Naive thymus-derived CD4-positive, alpha-beta T cell (primary cell): ENCODE measurements at regions of chr1 and their contacts with region 1.

Region 1: DNA sequence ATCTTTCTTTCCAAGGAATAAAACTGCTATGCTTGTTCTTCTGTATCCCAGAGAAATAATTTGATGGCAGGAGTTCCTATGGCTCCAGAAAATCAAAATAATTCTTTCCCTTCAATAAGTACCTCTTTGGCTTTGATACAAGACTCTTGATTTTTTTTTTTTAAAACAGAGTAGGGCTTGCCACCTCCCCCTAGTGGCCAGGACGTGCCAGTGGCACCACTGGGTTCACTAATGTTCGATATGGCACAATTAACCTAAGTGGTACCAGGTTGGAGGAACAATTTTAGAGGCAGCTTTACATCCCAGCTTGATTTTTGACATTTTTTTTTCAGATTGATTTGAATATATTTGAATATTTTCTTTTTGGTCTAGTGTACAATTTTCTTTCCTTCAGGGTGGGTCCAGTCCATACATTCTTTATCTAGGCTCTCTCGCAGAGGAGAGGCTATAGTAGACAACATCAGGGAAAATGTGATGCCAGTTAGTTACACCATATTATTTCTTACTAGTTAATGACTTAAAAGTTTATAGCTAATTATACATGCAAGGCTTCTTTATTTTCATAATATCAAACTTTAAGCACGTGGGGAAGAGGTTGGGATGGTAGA is 330.9 kb downstream of the S1PR1 start:
- DNase-seq: peak in 7 of 9 donors; percentile 18 to 53 (median 42)
- ATAC-seq: peak; percentile 80
- H3K4me3 ChIP-seq: no peak overlapping the region
- H3K4me3 Mint-ChIP-seq: no peak overlapping the region
- H3K27ac ChIP-seq: no peak overlapping the region
- H3K27ac Mint-ChIP-seq: no peak overlapping the region
- H3K4me1 ChIP-seq: no peaks in the 10 kb centered on the region
- H3K4me1 Mint-ChIP-seq: peaks cover 0 to 1% (median 0%) of the 10 kb centered on the region in 7 donors
- H3K27me3 ChIP-seq: no peaks in the 10 kb centered on the region
- H3K27me3 Mint-ChIP-seq: peaks cover 0 to 31% (median 15%) of the 10 kb centered on the region in 5 donors

Region 2: DNA sequence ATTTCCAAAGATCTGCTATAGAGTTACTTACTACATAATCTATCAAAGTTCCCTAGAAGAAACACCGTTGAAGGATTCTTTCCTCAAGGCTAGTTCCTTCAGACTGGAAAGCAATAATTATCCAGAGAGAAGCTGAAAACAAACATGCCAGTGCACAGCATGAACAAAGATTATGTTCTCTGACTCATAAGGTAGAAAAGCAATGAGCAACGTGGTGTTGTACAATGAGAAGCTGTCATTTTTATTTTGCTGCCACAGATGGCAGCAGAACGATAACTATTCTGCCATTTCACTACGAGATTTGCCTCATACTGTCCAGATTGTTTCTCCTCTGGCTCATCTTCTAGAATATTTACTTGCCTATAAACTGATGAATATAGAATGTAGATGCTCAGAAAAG is 683.7 kb before region 1 on chr1:
- CTCF ChIA-PET with region 1: no interaction called
- POLR2A ChIA-PET with region 1: no interaction called
- intact Hi-C with region 1: loop called in 1 of 2 experiments (anchors 10 kb)
- DNase-seq: no peak
- ATAC-seq: no peak
- H3K4me3 ChIP-seq: no peak overlapping the region
- H3K4me3 Mint-ChIP-seq: no peak overlapping the region
- H3K27ac ChIP-seq: no peak overlapping the region
- H3K27ac Mint-ChIP-seq: no peak overlapping the region
- H3K4me1 ChIP-seq: no peaks in the 10 kb centered on the region
- H3K4me1 Mint-ChIP-seq: no peaks in the 10 kb centered on the region
- H3K27me3 ChIP-seq: no peaks in the 10 kb centered on the region
- H3K27me3 Mint-ChIP-seq: peaks cover 0 to 5% (median 0%) of the 10 kb centered on the region in 5 donors

Region 3: GRCh38 chr1:100921109-100921706 is 646.5 kb before region 1 on chr1:
- CTCF ChIA-PET with region 1: no interaction called
- POLR2A ChIA-PET with region 1: no interaction called
- intact Hi-C with region 1: loop called in 1 of 2 experiments (anchors 10 kb)
- DNase-seq: peak in 6 of 9 donors; percentile 35 to 62 (median 50)
- ATAC-seq: peak; percentile 77
- H3K4me3 ChIP-seq: no peak overlapping the region
- H3K4me3 Mint-ChIP-seq: peak overlapping the region in 1 of 10 donors; percentile 6
- H3K27ac ChIP-seq: peak overlapping the region; percentile 38
- H3K27ac Mint-ChIP-seq: peak overlapping the region in 8 of 9 donors; percentile 28 to 92 (median 88)
- H3K4me1 ChIP-seq: peaks cover 27 to 37% of the 10 kb centered on the region in 2 donors
- H3K4me1 Mint-ChIP-seq: peaks cover 13 to 62% (median 43%) of the 10 kb centered on the region in 7 donors
- H3K27me3 ChIP-seq: no peaks in the 10 kb centered on the region
- H3K27me3 Mint-ChIP-seq: no peaks in the 10 kb centered on the region

Region 4: DNA sequence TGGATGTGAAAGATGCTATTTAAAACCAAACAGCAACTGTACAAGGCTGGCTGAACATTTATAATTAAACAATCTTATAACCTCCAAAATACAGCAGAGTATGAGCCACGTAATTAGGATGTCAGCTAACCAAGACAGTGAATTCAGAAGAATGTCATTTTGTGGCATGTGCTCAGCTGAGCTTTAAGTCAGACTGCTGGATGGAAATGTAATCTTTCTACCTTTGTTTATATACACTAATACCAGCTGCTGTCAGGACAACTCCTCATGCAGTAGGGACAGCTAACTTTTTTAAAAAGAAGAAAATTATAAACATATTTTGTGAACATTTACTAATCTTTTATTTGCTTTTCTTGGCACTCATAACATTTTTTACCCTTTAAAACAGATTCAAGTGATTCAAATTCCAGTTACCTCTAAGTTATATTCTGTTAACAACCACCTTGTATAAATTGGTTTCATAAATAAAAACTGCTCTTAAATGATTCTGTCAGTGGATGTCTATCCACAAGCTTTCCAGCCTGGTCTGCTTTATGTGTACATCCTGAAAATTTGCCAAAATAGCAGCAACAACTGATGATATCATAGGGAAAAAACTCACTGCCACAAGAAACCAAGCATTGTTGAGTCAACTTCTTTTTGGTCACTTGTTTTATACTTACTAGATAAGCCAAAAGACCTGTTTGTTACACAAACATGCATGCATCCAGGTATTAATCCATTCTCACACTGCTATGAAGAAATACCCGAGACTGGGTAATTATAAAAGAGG is 578.2 kb before region 1 on chr1:
- CTCF ChIA-PET with region 1: no interaction called
- POLR2A ChIA-PET with region 1: no interaction called
- intact Hi-C with region 1: no loop called
- DNase-seq: no peak
- ATAC-seq: no peak
- H3K4me3 ChIP-seq: no peak overlapping the region
- H3K4me3 Mint-ChIP-seq: no peak overlapping the region
- H3K27ac ChIP-seq: no peak overlapping the region
- H3K27ac Mint-ChIP-seq: peak overlapping the region in 5 of 9 donors; percentile 21 to 79 (median 43)
- H3K4me1 ChIP-seq: peaks cover 0 to 2% of the 10 kb centered on the region in 2 donors
- H3K4me1 Mint-ChIP-seq: peaks cover 0 to 38% (median 25%) of the 10 kb centered on the region in 7 donors
- H3K27me3 ChIP-seq: no peaks in the 10 kb centered on the region
- H3K27me3 Mint-ChIP-seq: no peaks in the 10 kb centered on the region

Region 5: GRCh38 chr1:101357444-101357986 is 210.2 kb before region 1 on chr1:
- CTCF ChIA-PET with region 1: no interaction called
- POLR2A ChIA-PET with region 1: no interaction called
- intact Hi-C with region 1: loop called in 1 of 2 experiments (anchors 1 kb)
- DNase-seq: peak; percentile 26 to 90 (median 85)
- ATAC-seq: peak; percentile 100
- H3K4me3 ChIP-seq: no peak overlapping the region
- H3K4me3 Mint-ChIP-seq: peak overlapping the region in 3 of 10 donors; percentile 1 to 84 (median 60)
- H3K27ac ChIP-seq: no peak overlapping the region
- H3K27ac Mint-ChIP-seq: peak overlapping the region in 8 of 9 donors; percentile 42 to 97 (median 80)
- H3K4me1 ChIP-seq: peaks cover 6 to 7% of the 10 kb centered on the region in 2 donors
- H3K4me1 Mint-ChIP-seq: peaks cover 5 to 12% (median 9%) of the 10 kb centered on the region in 7 donors
- H3K27me3 ChIP-seq: no peaks in the 10 kb centered on the region
- H3K27me3 Mint-ChIP-seq: peaks cover 0 to 19% (median 0%) of the 10 kb centered on the region in 5 donors

Region 6: GRCh38 chr1:101506541-101507164 is 61.0 kb before region 1 on chr1:
- CTCF ChIA-PET with region 1: interaction called, 4 read pairs
- POLR2A ChIA-PET with region 1: no interaction called
- intact Hi-C with region 1: loop called in 1 of 2 experiments (anchors 5 kb)
- DNase-seq: peak in 6 of 9 donors; percentile 8 to 56 (median 44)
- ATAC-seq: peak; percentile 73
- H3K4me3 ChIP-seq: no peak overlapping the region
- H3K4me3 Mint-ChIP-seq: no peak overlapping the region
- H3K27ac ChIP-seq: no peak overlapping the region
- H3K27ac Mint-ChIP-seq: no peak overlapping the region
- H3K4me1 ChIP-seq: no peaks in the 10 kb centered on the region
- H3K4me1 Mint-ChIP-seq: peaks cover 0 to 1% (median 0%) of the 10 kb centered on the region in 7 donors
- H3K27me3 ChIP-seq: no peaks in the 10 kb centered on the region
- H3K27me3 Mint-ChIP-seq: peaks cover 0 to 28% (median 0%) of the 10 kb centered on the region in 5 donors

Region 7: GRCh38 chr1:101520302-101520701 is 47.4 kb before region 1 on chr1:
- CTCF ChIA-PET with region 1: interaction called, 4 read pairs
- POLR2A ChIA-PET with region 1: no interaction called
- intact Hi-C with region 1: loop called (anchors 1 kb)
- DNase-seq: peak in 4 of 9 donors; percentile 4 to 14 (median 12)
- ATAC-seq: peak; percentile 38
- H3K4me3 ChIP-seq: no peak overlapping the region
- H3K4me3 Mint-ChIP-seq: no peak overlapping the region
- H3K27ac ChIP-seq: no peak overlapping the region
- H3K27ac Mint-ChIP-seq: no peak overlapping the region
- H3K4me1 ChIP-seq: no peaks in the 10 kb centered on the region
- H3K4me1 Mint-ChIP-seq: peaks cover 0 to 8% (median 4%) of the 10 kb centered on the region in 7 donors
- H3K27me3 ChIP-seq: no peaks in the 10 kb centered on the region
- H3K27me3 Mint-ChIP-seq: peaks cover 4 to 19% (median 7%) of the 10 kb centered on the region in 5 donors